A549 (cell line): ENCODE measurements at regions of chr19 and their contacts with region 1.

Region 1: GRCh38 chr19:36060430-36060829 is 5.7 kb downstream of the WDR62 start:
- DNase-seq: peak; percentile 68 to 90
- ATAC-seq: peak; percentile 84 to 90
- H3K4me3 ChIP-seq: no peak overlapping the region
- H3K27ac ChIP-seq: no peak overlapping the region
- H3K4me1 ChIP-seq: peaks cover 15% of the 10 kb centered on the region
- CTCF ChIP-seq: peak; percentile 77
- EP300 ChIP-seq: no peak
- POLR2A ChIP-seq: no peak
- RAD21 ChIP-seq: peak; percentile 80 to 84

Region 2: GRCh38 chr19:35937345-35938281 is 122.8 kb before region 1 on chr19:
- CTCF ChIA-PET with region 1: no interaction called
- POLR2A ChIA-PET with region 1: no interaction called
- DNase-seq: no peak
- ATAC-seq: peak; percentile 7 to 23; a peak in 5 of 6 replicates
- H3K4me3 ChIP-seq: peak overlapping the region; percentile 66
- H3K27ac ChIP-seq: peak overlapping the region in 1 of 2 experiments; percentile 93; a peak in 2 of 6 replicates
- H3K4me1 ChIP-seq: peaks cover 23% of the 10 kb centered on the region
- CTCF ChIP-seq: no peak
- EP300 ChIP-seq: no peak
- POLR2A ChIP-seq: no peak
- RAD21 ChIP-seq: no peak

Region 3: DNA sequence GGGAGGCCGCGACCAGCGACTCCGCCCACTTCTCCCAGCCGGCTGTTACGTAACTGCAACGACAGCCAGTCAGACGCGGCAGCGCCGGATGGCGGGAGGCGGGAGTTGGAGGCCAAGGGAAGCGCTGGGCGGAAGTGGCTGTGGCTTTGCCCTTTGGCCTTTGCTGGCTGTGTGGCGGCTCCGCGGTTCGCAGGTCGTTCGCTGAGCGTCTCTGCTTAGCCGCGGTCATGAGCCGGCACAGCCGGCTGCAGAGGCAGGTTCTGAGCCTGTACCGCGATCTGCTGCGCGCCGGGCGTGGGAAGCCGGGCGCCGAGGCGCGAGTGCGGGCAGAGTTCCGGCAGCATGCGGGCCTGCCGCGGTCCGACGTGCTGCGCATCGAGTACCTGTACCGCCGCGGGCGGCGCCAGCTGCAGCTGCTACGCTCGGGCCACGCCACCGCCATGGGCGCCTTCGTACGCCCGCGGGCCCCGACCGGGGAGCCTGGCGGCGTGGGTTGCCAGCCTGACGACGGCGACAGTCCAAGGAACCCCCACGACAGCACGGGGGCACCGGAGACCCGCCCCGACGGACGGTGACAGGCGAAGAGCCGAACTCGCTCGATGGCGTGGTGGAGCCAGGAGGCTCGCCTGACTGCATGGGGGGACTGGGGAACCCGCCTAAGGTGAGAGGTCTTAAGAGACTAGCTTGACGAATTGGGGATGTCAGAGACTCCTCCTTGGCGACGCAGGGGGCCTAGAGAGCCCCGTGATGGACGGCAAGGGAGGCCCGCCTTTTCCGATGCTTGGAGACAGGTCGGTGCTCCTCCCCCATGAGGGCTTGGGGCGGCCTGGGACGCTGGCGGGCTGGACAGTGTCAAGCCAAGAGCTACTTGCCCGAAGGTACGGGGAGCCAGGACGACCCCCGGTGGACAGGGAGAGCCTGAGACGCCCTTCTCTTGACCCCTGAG is 65.1 kb before region 1 on chr19 and contains the start of gene SDHAF1:
- CTCF ChIA-PET with region 1: interaction called, 10 read pairs
- POLR2A ChIA-PET with region 1: no interaction called
- DNase-seq: peak; percentile 98 to 100
- ATAC-seq: peak; percentile 90 to 93
- H3K4me3 ChIP-seq: peak within 1 kb of the TSS; percentile 79
- H3K27ac ChIP-seq: peak within 1 kb of the TSS; percentile 88 to 90
- H3K4me1 ChIP-seq: peaks cover 26% of the 10 kb centered on the region
- CTCF ChIP-seq: 0 out of 3 replicates have a peak, but pooled peaks have one; percentile 8
- EP300 ChIP-seq: no peak
- POLR2A ChIP-seq: no peak; the same call in none of the 2 replicates
- RAD21 ChIP-seq: peak in 1 of 2 experiments; percentile 16; a peak in 2 of 5 replicates
- polyA plus RNA-seq, gene SDHAF1: 22.8 and 25.3 TPM in 2 replicates

Region 4: GRCh38 chr19:36073121-36073872 is 12.9 kb after region 1 on chr19:
- CTCF ChIA-PET with region 1: interaction called, 53 read pairs
- POLR2A ChIA-PET with region 1: no interaction called
- DNase-seq: no peak
- ATAC-seq: peak in 1 of 2 experiments; percentile 12; a peak in 2 of 6 replicates
- H3K4me3 ChIP-seq: no peak overlapping the region
- H3K27ac ChIP-seq: no peak overlapping the region
- H3K4me1 ChIP-seq: peaks cover 13% of the 10 kb centered on the region
- CTCF ChIP-seq: no peak
- EP300 ChIP-seq: no peak
- POLR2A ChIP-seq: no peak
- RAD21 ChIP-seq: no peak

Region 5: GRCh38 chr19:36093146-36093662 is 32.8 kb after region 1 on chr19:
- CTCF ChIA-PET with region 1: interaction called, 157 read pairs
- POLR2A ChIA-PET with region 1: no interaction called
- DNase-seq: no peak
- ATAC-seq: no peak
- H3K4me3 ChIP-seq: no peak overlapping the region
- H3K27ac ChIP-seq: no peak overlapping the region
- H3K4me1 ChIP-seq: no peaks in the 10 kb centered on the region
- CTCF ChIP-seq: no peak
- EP300 ChIP-seq: no peak
- POLR2A ChIP-seq: no peak
- RAD21 ChIP-seq: no peak

Region 6: DNA sequence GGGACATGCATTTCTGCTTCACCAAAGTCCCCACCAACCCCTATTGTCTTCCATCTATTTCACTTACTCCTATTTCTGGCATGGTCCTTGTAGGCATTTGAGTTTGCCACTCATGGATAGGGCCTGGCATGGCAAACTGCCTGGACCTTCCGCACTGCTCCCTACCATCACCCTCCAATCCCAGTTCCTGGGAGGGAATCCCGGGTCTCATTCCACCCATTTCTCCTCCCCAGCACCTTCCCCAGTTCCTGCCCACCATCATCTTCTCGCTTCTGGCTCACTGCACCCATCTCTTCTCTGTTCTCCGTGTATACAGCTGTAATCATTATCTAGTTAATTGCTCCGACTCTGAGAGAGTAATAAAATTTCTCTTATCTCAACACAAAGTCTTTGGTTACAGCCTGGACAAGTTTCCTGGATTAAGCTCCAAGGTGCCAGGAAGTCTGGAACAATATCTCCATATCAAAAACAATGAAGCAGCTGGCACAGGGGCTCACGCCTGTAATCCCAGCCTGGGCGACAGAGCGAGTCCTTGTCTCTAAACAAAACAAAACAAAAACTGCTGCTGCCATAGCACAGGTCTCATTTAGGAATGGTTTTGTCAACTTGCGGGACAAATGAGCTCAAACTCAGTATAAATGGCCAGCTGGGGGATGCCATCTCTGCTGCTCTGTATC is 108.8 kb after region 1 on chr19:
- CTCF ChIA-PET with region 1: interaction called, 54 read pairs
- POLR2A ChIA-PET with region 1: no interaction called
- DNase-seq: no peak
- ATAC-seq: no peak
- H3K4me3 ChIP-seq: no peak overlapping the region
- H3K27ac ChIP-seq: no peak overlapping the region
- H3K4me1 ChIP-seq: 0 out of 3 replicates have a peak, but pooled peaks cover 3% of the 10 kb centered on the region
- CTCF ChIP-seq: no peak
- EP300 ChIP-seq: no peak
- POLR2A ChIP-seq: no peak
- RAD21 ChIP-seq: no peak